PC-3 (cell line): ENCODE measurements at regions of chr1 and their contacts with region 1.

Region 1: GRCh38 chr1:37479255-37480124 is 5.1 kb downstream of the ZC3H12A start:
- DNase-seq: peak; percentile 98
- ATAC-seq: peak; percentile 42
- H3K4me3 ChIP-seq: peak overlapping the region; percentile 71
- H3K27ac ChIP-seq: peak overlapping the region; percentile 97
- H3K4me1 ChIP-seq: peaks cover 58% of the 10 kb centered on the region
- H3K27me3 ChIP-seq: no peaks in the 10 kb centered on the region
- CTCF ChIP-seq: no peak

Region 2: DNA sequence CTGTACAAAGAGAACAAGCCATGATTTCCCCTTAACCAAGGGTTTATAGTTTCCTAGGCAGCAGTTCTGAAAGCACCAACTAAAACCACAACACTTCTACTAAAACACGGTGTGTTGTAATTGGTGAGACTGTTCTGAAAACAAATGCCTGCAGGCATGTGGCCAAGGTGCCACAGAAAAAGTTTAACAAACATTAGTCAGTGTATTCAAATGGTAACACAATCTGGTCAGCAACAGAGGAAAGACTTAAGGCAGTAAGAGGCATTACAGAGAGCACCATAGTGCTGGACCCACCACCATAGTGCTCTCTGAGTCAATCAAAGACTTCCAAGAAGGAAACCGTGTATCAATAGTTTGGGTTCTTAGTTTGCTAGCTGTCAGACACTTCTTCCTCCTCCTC is 57.9 kb after region 1 on chr1:
- CTCF ChIA-PET with region 1: no interaction called
- POLR2A ChIA-PET with region 1: no interaction called
- intact Hi-C with region 1: loop called (anchors 5 kb)
- DNase-seq: peak; percentile 94
- ATAC-seq: peak; percentile 80
- H3K4me3 ChIP-seq: no peak overlapping the region
- H3K27ac ChIP-seq: peak overlapping the region; percentile 56
- H3K4me1 ChIP-seq: peaks cover 46% of the 10 kb centered on the region
- H3K27me3 ChIP-seq: no peaks in the 10 kb centered on the region
- CTCF ChIP-seq: no peak